T-cell (primary cell): ENCODE measurements at regions of chr16 and their contacts with region 1.

Region 1: DNA sequence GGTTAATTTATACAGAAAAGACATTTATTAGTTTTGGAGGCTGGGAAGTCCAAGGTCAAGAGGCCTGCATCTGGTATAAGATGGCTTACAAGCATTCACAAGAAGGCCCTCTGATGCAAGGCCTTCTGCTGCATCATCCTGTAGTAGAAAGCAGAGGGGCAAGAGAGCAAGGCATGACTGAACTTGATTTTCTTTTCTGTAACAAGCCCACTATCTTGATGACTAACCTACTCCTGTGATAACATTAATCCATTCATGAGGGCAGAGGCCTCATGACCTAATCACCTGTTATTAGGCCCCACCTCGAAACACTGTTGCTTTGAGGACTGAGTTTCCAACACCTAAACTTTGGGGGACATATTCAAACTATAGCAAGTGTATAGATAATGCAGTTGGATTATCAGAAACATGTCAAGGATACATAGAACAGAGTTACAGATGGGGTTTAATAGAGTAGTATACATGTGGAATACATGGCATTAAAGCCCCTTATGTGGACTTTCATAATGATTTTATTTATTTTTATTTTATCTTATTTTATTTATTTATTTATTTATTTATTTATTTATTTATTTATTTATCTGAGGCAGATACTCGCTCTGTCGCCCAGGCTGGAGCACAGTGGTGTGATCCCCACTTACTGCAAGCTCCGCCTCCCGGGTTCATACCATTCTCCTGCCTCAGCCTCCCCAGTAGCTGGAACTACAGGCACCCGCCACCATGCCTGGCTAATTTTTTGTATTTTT is 88.2 kb downstream of the CHD9 start:
- DNase-seq: no peak
- ATAC-seq: no peak
- H3K4me3 ChIP-seq: no peak overlapping the region
- H3K4me3 Mint-ChIP-seq: no peak overlapping the region
- H3K27ac ChIP-seq: no peak overlapping the region
- H3K27ac Mint-ChIP-seq: no peak overlapping the region
- H3K4me1 ChIP-seq: peaks cover 0 to 2% of the 10 kb centered on the region in 2 experiments
- H3K4me1 Mint-ChIP-seq: peaks cover 6 to 17% (median 6%) of the 10 kb centered on the region in 3 donors
- H3K27me3 ChIP-seq: no peaks in the 10 kb centered on the region
- H3K27me3 Mint-ChIP-seq: no peaks in the 10 kb centered on the region

Region 2: GRCh38 chr16:53073022-53073421 is 70.0 kb before region 1 on chr16:
- CTCF ChIA-PET with region 1: interaction called in 1 of 2 experiments, 5 read pairs
- POLR2A ChIA-PET with region 1: interaction called in 1 of 2 experiments, 12 read pairs
- DNase-seq: no peak
- ATAC-seq: no peak
- H3K4me3 ChIP-seq: no peak overlapping the region
- H3K4me3 Mint-ChIP-seq: no peak overlapping the region
- H3K27ac ChIP-seq: no peak overlapping the region
- H3K27ac Mint-ChIP-seq: no peak overlapping the region
- H3K4me1 ChIP-seq: peaks cover 5 to 13% of the 10 kb centered on the region in 2 experiments
- H3K4me1 Mint-ChIP-seq: peaks cover 26 to 32% (median 27%) of the 10 kb centered on the region in 3 donors
- H3K27me3 ChIP-seq: no peaks in the 10 kb centered on the region
- H3K27me3 Mint-ChIP-seq: no peaks in the 10 kb centered on the region